AG04450 (cell line): ENCODE measurements at regions of chr7 and their contacts with region 1.

Region 1: DNA sequence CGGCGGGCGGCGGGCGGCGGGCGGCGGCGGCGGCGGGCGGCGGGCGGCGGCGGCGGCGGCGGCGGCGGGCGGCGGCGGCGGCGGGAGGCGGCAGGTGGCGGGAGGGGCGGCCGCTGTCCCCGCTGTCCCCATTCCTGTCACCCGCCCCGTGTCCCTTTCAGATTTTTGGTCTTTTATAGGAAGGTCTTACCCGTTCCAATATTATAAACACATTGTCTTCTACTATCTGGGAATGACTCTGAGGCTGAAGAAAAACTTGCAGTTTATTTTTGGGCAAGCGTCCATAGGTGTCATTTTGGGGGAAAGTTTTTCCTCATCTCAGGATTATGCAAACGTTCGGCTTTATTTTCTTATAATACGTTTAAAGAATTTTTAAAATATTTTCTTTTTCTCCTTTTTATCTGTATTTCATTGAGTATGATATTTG is 578 bp downstream of the ZNF713 start:
- DNase-seq: no peak
- H3K4me3 ChIP-seq: peak overlapping the region; percentile 71
- H3K27ac ChIP-seq: no peak overlapping the region
- H3K27me3 ChIP-seq: no peaks in the 10 kb centered on the region
- CTCF ChIP-seq: no peak

Region 2: GRCh38 chr7:55515569-55516279 is 372.1 kb before region 1 on chr7:
- CTCF ChIA-PET with region 1: no interaction called
- POLR2A ChIA-PET with region 1: no interaction called
- DNase-seq: no peak
- H3K4me3 ChIP-seq: no peak overlapping the region
- H3K27ac ChIP-seq: no peak overlapping the region
- H3K27me3 ChIP-seq: no peaks in the 10 kb centered on the region
- CTCF ChIP-seq: no peak

Region 3: DNA sequence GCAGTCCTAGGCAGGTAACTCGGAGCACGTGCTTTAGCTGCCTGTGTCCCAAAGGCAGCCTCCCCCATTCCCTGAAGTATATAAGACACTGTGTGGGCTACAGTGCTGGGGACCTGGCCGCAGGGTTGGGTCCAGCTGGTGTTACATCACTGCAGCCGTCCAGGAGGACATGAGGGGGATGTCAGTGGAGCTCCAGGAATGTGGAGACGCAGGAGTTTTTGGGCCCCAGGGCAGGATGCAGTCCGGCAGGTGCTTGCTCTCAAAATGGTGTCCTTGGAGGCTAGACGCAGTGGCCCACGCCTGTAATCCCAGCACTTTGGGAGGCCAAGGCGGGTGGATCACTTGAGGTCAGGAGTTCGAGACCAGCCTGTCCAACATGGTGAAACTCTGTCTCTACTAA is 12.6 kb before region 1 on chr7:
- CTCF ChIA-PET with region 1: no interaction called
- POLR2A ChIA-PET with region 1: interaction called, 10 read pairs
- DNase-seq: no peak
- H3K4me3 ChIP-seq: no peak overlapping the region
- H3K27ac ChIP-seq: no peak overlapping the region
- H3K27me3 ChIP-seq: no peaks in the 10 kb centered on the region
- CTCF ChIP-seq: no peak